ENCODE measurements at regions of chr19 and their contacts with region 1.

Region 1: GRCh38 chr19:7293795-7294570 is at the start of gene INSR:
- DNase-seq: peak; percentile 89
- ATAC-seq: peak; percentile 94 to 97
- total RNA-seq, gene INSR: 44.6 to 52.9 TPM

Region 2: DNA sequence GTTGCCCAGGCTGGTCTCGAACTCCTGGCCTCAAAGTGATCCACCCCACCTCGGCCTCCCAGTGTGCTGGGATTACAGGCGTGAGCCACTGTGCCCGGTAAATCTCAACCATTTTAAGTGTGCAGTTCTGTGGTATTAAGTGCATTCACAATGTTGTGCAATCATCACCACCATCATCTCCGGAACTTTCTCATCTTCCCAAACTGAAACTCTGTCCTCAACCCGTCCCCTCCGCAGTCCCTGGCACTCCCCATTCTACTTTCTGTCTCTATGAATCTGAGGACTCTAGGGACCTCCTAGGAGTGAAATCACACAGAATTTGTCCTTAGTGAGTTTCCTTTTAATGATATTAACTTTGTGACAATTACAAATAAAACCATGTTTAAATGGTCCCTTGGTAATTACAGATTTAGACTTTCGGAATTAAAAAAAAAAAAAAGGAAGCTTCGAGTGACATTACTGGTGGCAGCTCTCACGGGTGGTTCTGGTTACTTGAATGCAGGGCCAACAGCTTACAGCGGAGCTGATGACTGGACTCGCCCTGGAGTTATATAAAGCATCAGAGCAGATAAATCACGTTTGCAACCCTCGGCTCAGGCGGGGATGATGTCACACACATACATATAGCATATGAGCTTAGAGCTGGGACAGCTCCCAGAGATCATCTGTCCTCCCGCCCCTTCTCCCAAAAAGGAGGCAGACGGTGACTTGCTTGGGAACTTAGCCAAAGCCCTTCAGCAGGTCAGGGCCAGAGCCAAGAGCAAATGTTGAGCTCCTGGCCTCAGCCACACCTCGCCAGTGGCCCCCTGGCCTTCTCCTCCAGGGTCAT is 134.7 kb before region 1 on chr19:
- intact Hi-C with region 1: loop called in 1 of 2 experiments (anchors 10 kb)
- DNase-seq: peak; percentile 74
- ATAC-seq: peak; percentile 97

Region 3: GRCh38 chr19:7188698-7189629 is 105.0 kb before region 1 on chr19:
- intact Hi-C with region 1: loop called in 1 of 2 experiments (anchors 5 kb)
- DNase-seq: peak; percentile 47
- ATAC-seq: peak; percentile 65 to 73

Region 4: GRCh38 chr19:7197760-7198696 is 96.0 kb before region 1 on chr19:
- intact Hi-C with region 1: loop called in 1 of 2 experiments (anchors 1 kb)
- DNase-seq: peak; percentile 94
- ATAC-seq: peak; percentile 95

Region 5: DNA sequence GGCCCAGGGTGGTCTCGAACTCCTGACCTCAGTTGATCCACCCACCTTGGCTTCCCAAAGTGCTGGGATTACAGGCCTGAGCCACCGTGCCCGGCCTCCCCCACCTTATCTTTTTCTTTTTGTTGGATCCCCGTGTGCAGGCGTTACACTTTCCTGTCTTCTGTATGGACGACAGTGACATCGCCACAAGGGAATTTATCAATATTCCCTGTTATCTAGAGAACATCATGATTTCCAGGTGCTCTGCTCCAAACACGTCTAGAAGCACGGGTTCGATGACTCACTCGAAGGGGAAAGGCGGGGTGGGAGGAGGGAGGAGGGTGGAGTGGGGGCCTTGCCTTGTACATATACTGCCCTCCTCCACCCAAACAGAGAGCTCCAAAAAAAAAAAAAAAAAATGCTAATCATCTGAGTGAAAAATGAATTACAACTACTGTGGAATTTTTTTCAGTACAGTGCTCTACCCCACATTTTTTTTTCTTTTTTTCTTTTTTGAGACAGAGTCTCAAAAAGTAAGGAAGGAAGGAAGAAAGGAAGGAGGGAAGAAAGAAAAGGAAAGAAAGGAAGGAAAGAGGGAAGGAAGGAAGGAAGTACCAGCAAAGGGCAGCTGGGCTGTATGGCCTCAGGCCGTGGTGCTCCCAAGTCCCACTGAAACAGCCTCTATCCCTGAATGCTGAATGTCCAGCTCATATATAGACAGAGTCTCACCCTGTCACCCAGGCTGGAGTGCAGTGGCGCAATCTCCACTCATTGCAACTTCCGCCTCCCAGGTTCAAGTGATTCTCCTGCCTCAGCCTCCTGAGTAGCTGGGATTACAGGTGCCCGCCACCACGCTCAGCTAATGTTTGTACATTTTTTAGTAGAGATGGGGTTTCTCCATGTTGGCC is 36.6 kb before region 1 on chr19:
- intact Hi-C with region 1: no loop called
- DNase-seq: peak; percentile 42
- ATAC-seq: peak in 1 of 2 donors; percentile 87